CD4-positive, alpha-beta memory T cell (primary cell): ENCODE measurements at regions of chr1 and their contacts with region 1.

Region 1: GRCh38 chr1:27154991-27155781 is at the start of gene SLC9A1:
- DNase-seq: peak; percentile 93 to 95 (median 93)
- H3K4me3 ChIP-seq: peak within 1 kb of the TSS; percentile 38 to 42
- H3K4me3 Mint-ChIP-seq: peak within 1 kb of the TSS; percentile 82 to 95 (median 92)
- H3K27ac ChIP-seq: peak within 1 kb of the TSS; percentile 90
- H3K27ac Mint-ChIP-seq: peak within 1 kb of the TSS; percentile 97 to 100 (median 99)
- H3K4me1 ChIP-seq: peaks cover 46% of the 10 kb centered on the region
- H3K4me1 Mint-ChIP-seq: peaks cover 36 to 49% (median 43%) of the 10 kb centered on the region in 4 donors
- H3K27me3 ChIP-seq: no peaks in the 10 kb centered on the region
- H3K27me3 Mint-ChIP-seq: no peaks in the 10 kb centered on the region
- total RNA-seq, gene SLC9A1: 11.4 to 13.2 TPM

Region 2: DNA sequence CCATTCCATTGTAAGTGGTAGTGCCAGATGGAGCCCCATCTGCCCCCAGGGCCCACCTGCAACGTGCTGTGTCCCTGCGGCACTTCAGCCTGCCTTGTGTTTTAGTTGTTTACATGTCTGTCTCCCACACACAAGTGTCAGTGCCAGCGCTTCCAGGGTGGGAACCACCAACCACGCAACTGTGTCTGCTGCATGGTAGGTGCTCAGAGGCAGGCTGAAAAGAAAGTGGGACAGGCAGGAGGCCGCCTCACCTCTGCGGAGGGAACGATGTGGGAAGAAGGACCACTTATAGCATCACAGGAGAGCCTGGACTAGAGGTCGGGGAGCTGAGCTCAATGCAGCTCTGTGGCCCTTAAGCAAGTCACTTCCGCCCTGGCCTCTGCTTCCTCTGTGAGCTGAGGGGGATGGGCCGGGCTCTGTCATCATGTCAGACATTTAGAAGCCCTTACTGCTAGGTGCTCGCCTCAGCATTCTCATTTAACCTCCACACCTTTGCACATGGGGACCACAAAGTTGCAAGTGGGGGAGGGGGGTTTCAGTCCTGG is 18.1 kb before region 1 on chr1:
- CTCF ChIA-PET with region 1: interaction called, 137 read pairs
- POLR2A ChIA-PET with region 1: interaction called, 185 read pairs
- intact Hi-C with region 1: loop called (anchors 1 kb)
- DNase-seq: peak; percentile 74 to 85 (median 78)
- H3K4me3 ChIP-seq: peak overlapping the region; percentile 57 to 59
- H3K4me3 Mint-ChIP-seq: peak overlapping the region; percentile 83 to 94 (median 90)
- H3K27ac ChIP-seq: peak overlapping the region; percentile 67
- H3K27ac Mint-ChIP-seq: peak overlapping the region; percentile 98 to 100 (median 100)
- H3K4me1 ChIP-seq: peaks cover 35% of the 10 kb centered on the region
- H3K4me1 Mint-ChIP-seq: peaks cover 25 to 52% (median 44%) of the 10 kb centered on the region in 4 donors
- H3K27me3 ChIP-seq: no peaks in the 10 kb centered on the region
- H3K27me3 Mint-ChIP-seq: no peaks in the 10 kb centered on the region

Region 3: DNA sequence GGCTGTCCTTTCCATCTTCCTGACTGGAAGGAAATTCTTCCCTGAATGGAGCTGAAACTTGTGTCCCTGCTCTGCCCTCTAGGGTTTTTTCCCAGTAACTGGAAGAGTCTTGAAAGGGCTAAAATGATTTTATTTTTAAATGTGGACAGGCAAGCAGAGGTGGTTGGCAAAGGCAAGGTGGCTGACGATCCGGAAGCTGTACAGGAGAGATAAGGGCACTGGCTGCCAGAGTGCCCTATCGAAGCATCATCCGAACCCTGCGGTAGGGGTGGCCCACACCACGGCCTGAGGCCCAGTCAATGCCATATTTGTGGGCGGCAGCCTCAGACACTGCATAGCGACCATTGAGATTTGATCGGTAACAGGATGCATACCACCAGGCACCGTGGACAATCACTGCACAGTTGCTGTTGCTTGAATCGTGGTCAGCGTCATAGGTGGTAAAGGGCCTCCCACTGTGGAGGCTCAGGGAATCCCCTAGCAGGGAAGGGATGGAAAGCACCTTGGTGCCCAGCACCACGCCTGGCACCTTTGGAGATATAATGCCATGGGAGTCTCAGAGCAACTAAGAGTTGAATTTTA is 213.9 kb after region 1 on chr1:
- CTCF ChIA-PET with region 1: no interaction called
- POLR2A ChIA-PET with region 1: no interaction called
- intact Hi-C with region 1: no loop called
- DNase-seq: no peak
- H3K4me3 ChIP-seq: no peak overlapping the region
- H3K4me3 Mint-ChIP-seq: no peak overlapping the region
- H3K27ac ChIP-seq: no peak overlapping the region
- H3K27ac Mint-ChIP-seq: peak overlapping the region in 2 of 7 donors; percentile 21 to 37
- H3K4me1 ChIP-seq: peaks cover 18% of the 10 kb centered on the region
- H3K4me1 Mint-ChIP-seq: peaks cover 12 to 36% (median 24%) of the 10 kb centered on the region in 4 donors
- H3K27me3 ChIP-seq: no peaks in the 10 kb centered on the region
- H3K27me3 Mint-ChIP-seq: no peaks in the 10 kb centered on the region